Left lung (tissue), 14 donors: ENCODE measurements at regions of chr11 and their contacts with region 1.

Region 1: GRCh38 chr11:73236854-73237253 is 18.8 kb downstream of the P2RY2 start:
- DNase-seq: peak in 1 of 4 donors; percentile 56
- ATAC-seq: peak; percentile 74
- H3K4me3 ChIP-seq: no peak overlapping the region
- H3K27ac ChIP-seq: peak overlapping the region in 1 of 2 donors; percentile 16
- H3K4me1 ChIP-seq: peaks cover 0 to 23% of the 10 kb centered on the region in 2 donors
- H3K27me3 ChIP-seq: no peaks in the 10 kb centered on the region
- CTCF ChIP-seq: peak; percentile 51 to 67

Region 2: GRCh38 chr11:72885749-72886609 is 350.9 kb before region 1 on chr11:
- intact Hi-C with region 1: no loop called
- DNase-seq: no peak
- ATAC-seq: no peak
- H3K4me3 ChIP-seq: no peak overlapping the region
- H3K27ac ChIP-seq: no peak overlapping the region
- H3K4me1 ChIP-seq: no peaks in the 10 kb centered on the region
- H3K27me3 ChIP-seq: no peaks in the 10 kb centered on the region
- CTCF ChIP-seq: no peak

Region 3: DNA sequence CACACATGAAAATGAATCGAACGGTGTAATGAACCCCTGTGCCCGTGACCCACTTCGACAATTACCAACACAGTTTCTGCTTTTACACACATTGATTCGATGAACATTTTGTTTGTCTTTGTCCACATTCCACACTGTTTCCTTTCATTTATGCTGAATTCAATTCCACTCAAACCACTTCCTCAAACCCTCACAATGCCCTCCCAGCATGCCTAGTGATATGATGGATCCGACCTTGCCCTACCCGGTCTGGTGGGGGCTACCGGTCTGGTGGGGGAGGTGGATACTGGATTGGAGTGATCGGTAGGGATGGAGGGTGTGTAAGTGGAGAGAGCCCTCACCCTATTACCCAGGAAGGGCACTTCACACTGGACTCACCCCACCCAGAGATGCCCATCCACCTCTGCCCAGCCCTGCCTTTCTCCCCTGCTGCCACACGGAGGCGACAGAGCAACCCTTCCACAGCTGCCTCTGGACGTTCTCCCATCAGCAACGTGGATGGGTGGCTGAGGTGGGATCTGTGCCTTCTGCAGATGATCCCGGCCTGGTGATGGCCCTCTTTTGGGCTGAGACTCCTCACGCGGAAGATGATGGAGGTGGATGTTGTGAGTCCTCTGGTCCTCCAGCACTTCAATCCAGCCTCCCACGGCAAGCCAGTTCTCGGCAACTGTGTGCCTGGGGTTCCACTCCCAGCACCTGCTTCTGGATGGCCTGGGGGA is 51.7 kb before region 1 on chr11:
- intact Hi-C with region 1: loop called in 1 of 2 experiments (anchors 5 kb)
- DNase-seq: peak; percentile 36 to 93 (median 71)
- ATAC-seq: peak; percentile 93
- H3K4me3 ChIP-seq: peak overlapping the region in 1 of 2 donors; percentile 19
- H3K27ac ChIP-seq: peak overlapping the region in 1 of 2 donors; percentile 23
- H3K4me1 ChIP-seq: peaks cover 0 to 54% of the 10 kb centered on the region in 2 donors
- H3K27me3 ChIP-seq: no peaks in the 10 kb centered on the region
- CTCF ChIP-seq: peak; percentile 83 to 88